ENCODE measurements at regions of chr17 and their contacts with region 1.

Region 1: GRCh38 chr17:2592971-2593820 is at the start of gene PAFAH1B1:
- DNase-seq: peak; percentile 93
- H3K4me3 Mint-ChIP-seq: peak within 1 kb of the TSS; percentile 82
- H3K27ac Mint-ChIP-seq: peak within 1 kb of the TSS; percentile 57
- H3K4me1 Mint-ChIP-seq: peaks cover 9% of the 10 kb centered on the region
- H3K27me3 Mint-ChIP-seq: no peaks in the 10 kb centered on the region
- CTCF ChIP-seq: no peak
- total RNA-seq, gene PAFAH1B1: 88.5 and 99.8 TPM in 2 replicates

Region 2: GRCh38 chr17:2634361-2634960 is 41.3 kb after region 1 on chr17:
- CTCF ChIA-PET with region 1: no interaction called
- intact Hi-C with region 1: loop called (anchors 5 kb)
- DNase-seq: peak; percentile 54
- H3K4me3 Mint-ChIP-seq: peak overlapping the region; percentile 26
- H3K27ac Mint-ChIP-seq: peak overlapping the region; percentile 80
- H3K4me1 Mint-ChIP-seq: peaks cover 45% of the 10 kb centered on the region
- H3K27me3 Mint-ChIP-seq: no peaks in the 10 kb centered on the region
- CTCF ChIP-seq: no peak

Region 3: GRCh38 chr17:2672026-2672425 is 78.8 kb after region 1 on chr17:
- CTCF ChIA-PET with region 1: no interaction called
- intact Hi-C with region 1: loop called (anchors 10 kb)
- DNase-seq: no peak
- H3K4me3 Mint-ChIP-seq: no peak overlapping the region
- H3K27ac Mint-ChIP-seq: no peak overlapping the region
- H3K4me1 Mint-ChIP-seq: no peaks in the 10 kb centered on the region
- H3K27me3 Mint-ChIP-seq: no peaks in the 10 kb centered on the region
- CTCF ChIP-seq: no peak

Measured in Calu3 (cell line).